HepG2 (cell line): ENCODE measurements at regions of chr1 and their contacts with region 1.

Region 1: DNA sequence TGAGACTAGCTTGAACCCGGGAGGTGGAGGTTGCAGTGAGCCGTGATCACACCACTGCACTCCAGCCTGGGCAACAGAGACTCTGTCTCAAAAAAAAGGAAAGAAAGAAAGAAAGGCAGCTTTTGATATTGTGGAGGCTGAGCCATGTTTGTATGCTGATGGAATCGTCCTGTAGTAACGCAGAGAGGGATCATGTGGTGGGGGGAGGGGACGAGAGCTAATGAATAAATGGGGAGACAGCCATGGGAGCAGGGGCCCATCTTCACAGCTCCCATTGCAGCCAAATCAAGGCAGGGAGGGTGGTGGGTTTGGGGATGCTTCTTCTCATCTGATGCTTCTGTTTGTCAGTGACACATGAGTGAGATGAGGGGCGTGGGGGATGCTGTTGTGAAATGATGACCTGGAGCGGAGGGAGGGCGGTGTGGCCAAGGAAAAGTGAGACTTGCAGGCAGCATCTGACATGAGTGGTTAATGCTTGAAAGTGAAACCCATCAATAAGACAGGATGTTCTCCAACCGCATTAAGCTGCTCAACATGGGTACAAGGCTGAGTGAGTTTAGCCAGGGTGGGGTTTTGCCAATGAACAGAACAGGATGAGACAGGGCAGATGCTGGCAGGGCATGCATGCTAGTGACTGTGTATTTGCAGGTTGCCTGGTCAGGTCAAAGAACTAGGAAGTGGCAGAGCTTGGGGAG is 16.7 kb downstream of the SPATA21 start:
- DNase-seq: no peak
- ATAC-seq: no peak
- H3K4me3 ChIP-seq: no peak overlapping the region
- H3K27ac ChIP-seq: no peak overlapping the region
- H3K4me1 ChIP-seq: peaks cover 21% of the 10 kb centered on the region
- H3K27me3 ChIP-seq: no peaks in the 10 kb centered on the region
- CTCF ChIP-seq: no peak
- EP300 ChIP-seq: no peak
- POLR2A ChIP-seq: no peak
- RAD21 ChIP-seq: no peak

Region 2: GRCh38 chr1:16318555-16318954 is 102.0 kb before region 1 on chr1:
- CTCF ChIA-PET with region 1: no interaction called
- POLR2A ChIA-PET with region 1: no interaction called
- in situ Hi-C with region 1: no loop called
- intact Hi-C with region 1: no loop called
- DNase-seq: no peak
- ATAC-seq: no peak
- H3K4me3 ChIP-seq: no peak overlapping the region
- H3K27ac ChIP-seq: no peak overlapping the region
- H3K4me1 ChIP-seq: peaks cover 15% of the 10 kb centered on the region
- H3K27me3 ChIP-seq: no peaks in the 10 kb centered on the region
- CTCF ChIP-seq: no peak
- EP300 ChIP-seq: no peak
- POLR2A ChIP-seq: no peak
- RAD21 ChIP-seq: no peak

Region 3: DNA sequence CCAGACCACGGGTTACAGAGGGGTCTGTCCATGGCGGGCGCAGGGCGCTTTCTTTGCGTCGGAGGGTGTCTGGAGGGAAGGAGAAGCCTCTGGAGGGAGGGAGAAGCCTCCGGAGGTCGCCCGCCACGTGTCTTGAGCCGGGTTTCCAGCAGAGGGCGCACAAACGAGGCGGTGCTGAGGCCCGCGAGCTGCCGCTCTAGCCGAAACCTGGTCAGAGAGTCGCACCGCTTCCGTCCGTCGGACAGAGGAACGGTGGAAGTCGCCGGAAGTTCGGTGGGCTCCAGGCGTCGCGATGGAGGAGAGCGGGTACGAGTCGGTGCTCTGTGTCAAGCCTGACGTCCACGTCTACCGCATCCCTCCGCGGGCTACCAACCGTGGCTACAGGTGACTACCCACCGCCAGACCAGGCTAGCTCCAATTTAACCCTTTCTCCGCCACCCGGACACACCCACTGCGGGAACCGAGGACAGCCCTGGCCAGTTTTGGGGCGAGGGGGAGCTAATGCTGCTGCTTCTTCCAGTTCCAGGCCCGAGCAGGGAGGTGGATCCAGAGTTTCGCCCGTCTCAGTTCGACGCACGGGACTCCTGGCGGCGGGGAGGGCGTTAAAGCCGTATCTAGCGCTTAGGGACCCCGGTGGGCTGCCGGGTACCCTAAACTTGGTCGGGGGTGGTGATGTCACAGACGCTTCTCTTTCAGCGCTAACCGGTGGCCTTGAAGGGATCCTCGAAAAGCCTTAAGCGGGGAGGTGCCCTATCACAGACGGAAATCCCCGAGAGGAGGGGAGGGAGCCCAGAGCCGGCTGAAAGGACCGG is 20.1 kb after region 1 on chr1 and contains the start of gene NECAP2:
- CTCF ChIA-PET with region 1: no interaction called
- POLR2A ChIA-PET with region 1: interaction called, 17 read pairs
- in situ Hi-C with region 1: no loop called
- intact Hi-C with region 1: no loop called
- DNase-seq: peak; percentile 84
- ATAC-seq: peak; percentile 97
- H3K4me3 ChIP-seq: peak within 1 kb of the TSS; percentile 83 to 97 (median 95)
- H3K27ac ChIP-seq: peak within 1 kb of the TSS; percentile 53
- H3K4me1 ChIP-seq: peaks cover 27% of the 10 kb centered on the region
- H3K27me3 ChIP-seq: no peaks in the 10 kb centered on the region; a peak in 1 of 5 replicates
- CTCF ChIP-seq: peak; percentile 99
- EP300 ChIP-seq: peak in 1 of 2 experiments; percentile 28; a peak in 2 of 4 replicates
- POLR2A ChIP-seq: peak; percentile 95 to 99
- RAD21 ChIP-seq: peak; percentile 71
- total RNA-seq, gene NECAP2: 52.3 and 62.6 TPM in 2 replicates

Region 4: DNA sequence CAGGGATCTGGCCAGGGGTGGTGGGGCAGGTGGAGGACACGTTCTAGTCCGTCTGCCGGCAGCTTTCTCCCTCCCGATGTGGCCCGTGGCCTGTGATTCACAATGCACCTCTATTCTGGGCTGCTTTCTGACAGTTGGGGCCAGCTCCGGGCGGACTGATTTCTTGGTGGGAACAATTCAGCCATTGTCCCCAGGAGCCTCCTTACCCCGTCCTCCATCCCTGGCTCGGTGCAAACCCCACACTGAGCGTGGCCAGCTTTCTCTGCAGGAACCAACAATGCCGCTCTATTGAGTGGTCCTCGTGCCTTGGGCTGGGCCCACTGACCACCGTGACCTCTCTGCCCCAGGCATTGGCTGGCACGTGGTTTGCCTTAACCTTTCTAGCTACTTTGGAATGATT is 668.9 kb after region 1 on chr1:
- CTCF ChIA-PET with region 1: no interaction called
- POLR2A ChIA-PET with region 1: no interaction called
- in situ Hi-C with region 1: no loop called
- intact Hi-C with region 1: loop called (anchors 10 kb)
- DNase-seq: no peak
- ATAC-seq: peak; percentile 40; the same call in 2 of the 3 replicates
- H3K4me3 ChIP-seq: no peak overlapping the region
- H3K27ac ChIP-seq: no peak overlapping the region
- H3K4me1 ChIP-seq: no peaks in the 10 kb centered on the region
- H3K27me3 ChIP-seq: peaks cover 5 to 15% of the 10 kb centered on the region in 2 experiments; a peak in 4 of 5 replicates
- CTCF ChIP-seq: no peak
- EP300 ChIP-seq: no peak
- POLR2A ChIP-seq: no peak
- RAD21 ChIP-seq: no peak